ENCODE measurements at regions of chr1 and their contacts with region 1.

Region 1: DNA sequence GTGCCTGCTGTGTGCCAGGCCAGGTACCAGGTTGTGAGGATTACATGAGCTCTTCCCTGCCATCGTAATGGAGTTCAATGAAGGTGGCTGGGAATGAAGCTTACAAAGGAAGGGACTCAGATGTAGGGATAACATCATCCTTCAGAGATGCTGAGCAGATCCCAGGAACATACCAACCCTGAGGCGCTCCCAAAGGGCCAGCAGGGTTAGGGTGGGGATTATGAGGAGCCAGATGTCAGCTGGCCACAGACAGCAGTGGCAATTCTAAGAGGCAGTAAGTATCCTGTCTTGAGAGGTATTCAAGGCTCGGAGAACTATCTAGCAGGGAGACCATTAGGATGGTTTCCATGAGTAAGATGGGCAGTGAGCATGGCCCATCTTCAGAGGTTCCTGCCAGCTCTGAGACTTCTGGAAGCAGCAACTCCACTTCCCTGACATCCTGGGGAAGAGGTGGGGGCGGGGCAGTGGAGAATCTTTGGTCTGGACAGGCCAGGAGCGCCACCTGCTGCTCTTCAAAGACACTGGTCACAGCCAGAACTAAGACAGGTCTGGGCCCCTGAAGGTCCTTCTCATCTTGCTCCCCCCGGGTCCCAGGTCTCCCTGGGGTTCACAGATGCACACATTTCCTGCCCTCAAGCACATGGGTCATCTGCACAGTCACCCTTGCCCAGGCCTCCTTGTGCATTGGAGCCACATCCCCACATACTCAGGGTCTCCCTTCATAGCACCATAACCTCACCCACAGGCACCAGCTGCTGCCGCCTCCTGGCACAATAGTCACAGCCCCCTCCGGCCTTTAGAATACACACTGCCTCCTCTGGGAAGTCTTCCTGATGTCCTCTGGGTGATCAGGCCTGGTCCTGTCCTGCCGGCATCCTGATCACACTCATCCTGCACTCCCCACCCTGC is 2.7 kb upstream of the SDC3 start:
- DNase-seq: peak; percentile 91
- ATAC-seq: peak; percentile 84 to 85
- H3K4me3 ChIP-seq: no peak overlapping the region
- H3K27ac ChIP-seq: no peak overlapping the region
- H3K4me1 ChIP-seq: peaks cover 48% of the 10 kb centered on the region
- H3K27me3 ChIP-seq: no peaks in the 10 kb centered on the region
- CTCF ChIP-seq: peak; percentile 83

Region 2: GRCh38 chr1:30779294-30780071 is 131.8 kb before region 1 on chr1:
- intact Hi-C with region 1: loop called (anchors 5 kb)
- DNase-seq: peak; percentile 89
- ATAC-seq: peak; percentile 82 to 83
- H3K4me3 ChIP-seq: no peak overlapping the region
- H3K27ac ChIP-seq: no peak overlapping the region
- H3K4me1 ChIP-seq: peaks cover 21% of the 10 kb centered on the region
- H3K27me3 ChIP-seq: no peaks in the 10 kb centered on the region
- CTCF ChIP-seq: peak; percentile 97

Region 3: DNA sequence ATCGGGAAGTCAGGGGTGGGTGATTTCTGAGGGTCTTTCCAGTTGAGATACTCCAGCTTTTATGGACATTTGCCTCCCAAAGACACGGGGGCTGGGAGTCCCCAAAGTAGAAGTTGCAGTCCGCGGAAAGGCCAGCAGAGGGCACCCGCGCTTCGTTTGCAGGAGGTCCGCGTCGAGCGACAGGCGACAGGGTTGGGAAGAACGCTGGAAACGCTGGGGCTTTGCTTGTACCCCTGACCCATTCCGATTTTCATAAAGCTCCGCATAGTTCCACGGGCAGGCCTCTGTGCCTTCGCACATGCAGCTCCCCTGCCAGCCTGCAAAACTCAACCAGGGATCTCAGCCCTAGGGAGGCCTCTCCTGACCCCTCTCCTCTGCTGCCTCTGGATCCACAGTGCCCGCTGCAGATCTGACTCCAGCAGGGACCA is 109.5 kb before region 1 on chr1:
- intact Hi-C with region 1: loop called (anchors 5 kb)
- DNase-seq: peak; percentile 87
- ATAC-seq: peak; percentile 70 to 71
- H3K4me3 ChIP-seq: peak overlapping the region; percentile 19
- H3K27ac ChIP-seq: no peak overlapping the region
- H3K4me1 ChIP-seq: peaks cover 29% of the 10 kb centered on the region
- H3K27me3 ChIP-seq: peaks cover 4% of the 10 kb centered on the region
- CTCF ChIP-seq: peak; percentile 97

Measured in lower lobe of right lung (tissue), 2 donors.